ENCODE measurements at regions of chr1 and their contacts with region 1.

Region 1: DNA sequence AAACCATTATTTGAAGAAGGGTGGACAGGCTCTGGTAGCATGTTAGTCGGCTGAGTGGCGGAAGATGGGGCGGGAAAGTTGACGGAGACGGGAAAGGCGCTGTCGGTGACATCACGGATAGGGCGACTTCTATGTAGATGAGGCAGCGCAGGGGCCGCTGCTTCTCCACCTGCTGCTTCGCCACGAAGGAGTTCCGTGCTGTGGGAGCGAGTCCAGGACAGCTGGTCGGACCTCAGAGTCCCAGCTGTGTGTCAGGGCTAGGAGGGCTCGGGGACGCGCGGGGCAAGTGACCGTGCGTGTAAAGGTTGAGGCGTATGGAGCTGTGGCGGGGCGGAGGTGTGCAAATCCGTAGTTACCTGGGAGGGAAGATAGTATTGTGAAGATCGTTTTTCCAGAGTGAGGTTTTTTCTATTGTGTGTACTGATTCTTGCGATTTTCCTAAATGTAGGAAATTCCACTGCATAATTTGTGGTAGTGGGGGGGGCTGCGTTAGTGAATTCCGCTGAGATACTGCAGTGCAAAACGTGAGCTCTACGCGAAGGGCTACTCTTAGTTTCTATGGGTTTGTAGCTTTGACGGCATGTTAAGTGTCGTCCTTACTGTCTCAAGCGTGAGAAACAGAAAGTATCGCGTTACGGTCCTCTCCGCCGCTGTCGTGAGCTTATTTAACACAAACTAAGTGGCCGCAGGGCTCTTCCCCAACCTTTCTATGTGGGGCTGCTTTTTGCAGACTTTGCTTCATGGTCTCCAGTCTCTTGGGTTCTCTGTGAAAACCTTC is 111.2 kb upstream of the NBPF11 start:
- DNase-seq: peak; percentile 92
- ATAC-seq: peak; percentile 90
- H3K4me3 Mint-ChIP-seq: peak overlapping the region; percentile 77
- H3K27ac Mint-ChIP-seq: peak overlapping the region; percentile 97
- H3K4me1 Mint-ChIP-seq: peaks cover 18% of the 10 kb centered on the region
- H3K27me3 Mint-ChIP-seq: peaks cover 9% of the 10 kb centered on the region
- CTCF ChIP-seq: no peak

Region 2: DNA sequence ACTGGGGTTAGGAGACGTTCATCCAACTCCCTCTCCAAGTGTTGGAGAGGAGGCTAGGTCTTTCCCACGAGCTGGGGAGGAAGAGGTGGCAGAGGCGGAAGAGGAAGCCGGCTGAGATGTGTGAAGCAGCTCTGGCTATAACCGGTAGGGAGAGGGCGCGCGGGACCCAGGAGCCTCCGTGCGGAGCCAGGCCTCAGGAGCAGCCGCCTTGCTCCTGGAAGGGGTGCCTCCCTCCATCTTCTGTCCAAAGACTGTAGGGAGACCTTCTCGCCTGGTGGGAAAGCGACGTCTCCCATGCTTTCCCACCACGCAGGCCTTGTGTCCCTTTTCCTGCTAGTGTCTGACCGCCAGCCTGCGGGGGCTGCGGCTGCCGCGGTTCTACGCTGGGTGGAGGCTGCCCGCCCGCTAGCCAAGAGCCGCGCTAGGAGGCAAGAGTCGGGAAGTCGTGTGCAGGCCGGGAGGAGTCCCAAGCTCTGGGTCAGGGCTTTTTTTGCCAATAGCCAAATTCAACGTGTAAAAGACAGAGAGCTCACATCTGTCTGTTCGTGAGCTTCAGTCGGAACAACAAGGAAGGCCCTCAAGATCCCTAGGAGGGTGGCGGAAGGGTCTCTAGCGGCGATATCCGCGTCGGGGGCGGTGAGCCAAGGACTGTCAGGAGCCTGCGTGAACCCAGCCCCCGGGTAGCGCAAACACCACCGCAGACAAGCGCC is 102.8 kb before region 1 on chr1:
- CTCF ChIA-PET with region 1: no interaction called
- POLR2A ChIA-PET with region 1: no interaction called
- intact Hi-C with region 1: no loop called
- DNase-seq: no peak
- ATAC-seq: no peak
- H3K4me3 Mint-ChIP-seq: no peak overlapping the region
- H3K27ac Mint-ChIP-seq: no peak overlapping the region
- H3K4me1 Mint-ChIP-seq: peaks cover 8% of the 10 kb centered on the region
- H3K27me3 Mint-ChIP-seq: peaks cover 21% of the 10 kb centered on the region
- CTCF ChIP-seq: no peak

Region 3: DNA sequence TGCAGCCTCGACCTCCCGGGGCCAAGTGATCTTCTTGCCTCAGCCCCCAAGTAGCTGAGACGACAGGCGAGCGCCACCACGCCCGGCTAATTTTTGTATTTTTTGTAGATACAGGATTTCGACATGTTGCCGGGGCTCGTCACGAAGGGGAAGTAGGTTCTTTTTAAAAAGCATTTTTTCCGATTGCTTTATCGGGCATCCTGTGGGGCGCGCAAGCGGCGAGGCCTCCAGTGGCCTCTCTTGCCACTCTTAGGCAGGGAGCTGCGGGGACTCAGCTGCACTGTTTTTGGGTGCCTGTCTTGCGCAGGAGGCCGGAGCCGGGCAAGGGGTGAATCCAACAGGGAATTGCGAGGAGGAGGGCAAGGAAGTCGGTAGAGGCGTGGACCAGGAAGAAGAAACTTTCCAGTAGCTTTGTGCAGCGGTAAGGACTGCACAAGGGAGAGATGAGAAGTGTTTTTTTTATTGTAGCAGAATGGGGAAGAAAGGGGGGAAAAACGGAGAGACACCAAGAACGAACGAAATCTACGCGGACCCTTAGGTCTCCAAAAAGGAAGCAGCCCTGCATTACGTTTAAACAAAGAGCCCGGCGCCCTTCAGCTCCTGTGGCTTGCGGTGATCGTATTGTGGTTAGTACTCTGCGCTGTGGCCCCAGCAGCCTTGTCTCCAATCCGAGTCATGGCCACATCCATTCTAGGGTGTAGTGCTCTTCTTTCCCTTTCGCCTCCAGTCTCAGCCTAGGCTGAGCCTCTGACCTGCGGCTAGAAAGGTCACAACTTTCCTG is 55.0 kb after region 1 on chr1:
- CTCF ChIA-PET with region 1: no interaction called
- POLR2A ChIA-PET with region 1: interaction called, 14 read pairs
- intact Hi-C with region 1: no loop called
- DNase-seq: peak; percentile 90
- ATAC-seq: peak; percentile 85
- H3K4me3 Mint-ChIP-seq: peak overlapping the region; percentile 73
- H3K27ac Mint-ChIP-seq: peak overlapping the region; percentile 85
- H3K4me1 Mint-ChIP-seq: peaks cover 31% of the 10 kb centered on the region
- H3K27me3 Mint-ChIP-seq: peaks cover 23% of the 10 kb centered on the region
- CTCF ChIP-seq: no peak

Region 4: DNA sequence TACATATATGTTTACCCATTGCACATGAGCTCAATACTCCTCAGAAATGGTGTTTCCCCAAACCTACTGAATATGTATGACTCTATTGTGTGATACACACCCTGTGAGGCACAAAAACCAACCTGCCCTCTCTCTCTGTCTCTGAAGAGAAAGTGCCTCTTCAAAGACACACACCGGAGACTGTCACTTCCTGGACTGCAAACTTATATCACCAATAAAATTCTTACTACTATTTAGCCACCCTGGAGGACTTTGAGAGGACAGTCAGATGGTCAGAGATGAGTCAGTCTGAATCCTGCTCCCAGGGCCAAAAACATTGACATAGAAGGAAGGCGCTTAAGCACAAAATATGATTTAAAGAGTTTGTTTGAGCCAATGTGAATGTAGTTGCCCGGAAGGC is 109.4 kb after region 1 on chr1:
- CTCF ChIA-PET with region 1: no interaction called
- POLR2A ChIA-PET with region 1: interaction called, 16 read pairs
- intact Hi-C with region 1: no loop called
- DNase-seq: peak; percentile 74
- ATAC-seq: peak; percentile 74
- H3K4me3 Mint-ChIP-seq: peak overlapping the region; percentile 37
- H3K27ac Mint-ChIP-seq: peak overlapping the region; percentile 92
- H3K4me1 Mint-ChIP-seq: peaks cover 44% of the 10 kb centered on the region
- H3K27me3 Mint-ChIP-seq: no peaks in the 10 kb centered on the region
- CTCF ChIP-seq: no peak

Measured in activated CD8-positive, alpha-beta T cell treated with anti-CD3 and anti-CD28 coated beads for 36 hours (primary cell).